Heart left ventricle (tissue), 16 donors: ENCODE measurements at regions of chr7 and their contacts with region 1.

Region 1: DNA sequence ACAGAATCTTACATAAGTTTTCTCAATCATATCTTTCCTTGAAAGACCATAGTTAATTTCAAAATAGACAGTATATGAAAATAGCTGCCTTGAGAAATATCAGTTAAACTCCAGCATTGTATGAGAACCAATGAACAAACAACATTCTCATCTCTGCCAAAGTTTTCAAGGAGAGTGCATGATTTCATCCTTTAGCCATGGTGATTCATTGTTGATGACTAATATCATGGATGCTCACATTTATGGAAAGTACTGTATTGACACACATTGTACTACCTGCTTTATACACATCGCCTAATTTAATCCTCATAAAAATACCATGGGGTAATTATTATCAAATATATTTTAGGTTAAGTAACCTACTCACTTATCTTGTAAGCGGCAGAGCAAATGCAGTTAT is 250.3 kb downstream of the CNTNAP2 start:
- DNase-seq: no peak
- ATAC-seq: no peak
- H3K4me3 ChIP-seq: no peak overlapping the region
- H3K27ac ChIP-seq: no peak overlapping the region
- H3K4me1 ChIP-seq: no peaks in the 10 kb centered on the region
- H3K27me3 ChIP-seq: no peaks in the 10 kb centered on the region
- CTCF ChIP-seq: no peak
- POLR2A ChIP-seq: no peak

Region 2: DNA sequence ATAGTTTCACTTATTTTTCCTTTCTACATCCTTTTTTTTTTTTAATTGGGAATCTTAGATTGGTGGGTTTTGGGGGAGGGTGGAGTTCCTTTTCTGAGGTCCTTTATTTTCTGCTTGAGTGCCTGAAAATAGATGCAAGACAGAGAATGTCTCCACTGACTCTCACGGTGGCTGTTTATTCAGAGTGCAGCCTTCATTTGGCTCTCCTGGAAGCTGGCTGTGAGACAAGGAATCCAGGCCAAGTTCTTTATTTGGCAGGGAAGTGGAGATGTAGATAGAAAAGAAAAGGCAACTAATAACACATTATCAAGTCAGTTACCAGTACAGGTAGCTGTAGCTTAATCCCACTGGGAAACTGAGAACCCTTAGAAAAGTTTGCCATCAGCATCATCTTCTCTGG is 131.7 kb before region 1 on chr7:
- intact Hi-C with region 1: no loop called
- DNase-seq: no peak
- ATAC-seq: peak in 2 of 4 donors; percentile 46 to 56
- H3K4me3 ChIP-seq: no peak overlapping the region
- H3K27ac ChIP-seq: no peak overlapping the region
- H3K4me1 ChIP-seq: no peaks in the 10 kb centered on the region
- H3K27me3 ChIP-seq: no peaks in the 10 kb centered on the region
- CTCF ChIP-seq: no peak
- POLR2A ChIP-seq: no peak

Region 3: DNA sequence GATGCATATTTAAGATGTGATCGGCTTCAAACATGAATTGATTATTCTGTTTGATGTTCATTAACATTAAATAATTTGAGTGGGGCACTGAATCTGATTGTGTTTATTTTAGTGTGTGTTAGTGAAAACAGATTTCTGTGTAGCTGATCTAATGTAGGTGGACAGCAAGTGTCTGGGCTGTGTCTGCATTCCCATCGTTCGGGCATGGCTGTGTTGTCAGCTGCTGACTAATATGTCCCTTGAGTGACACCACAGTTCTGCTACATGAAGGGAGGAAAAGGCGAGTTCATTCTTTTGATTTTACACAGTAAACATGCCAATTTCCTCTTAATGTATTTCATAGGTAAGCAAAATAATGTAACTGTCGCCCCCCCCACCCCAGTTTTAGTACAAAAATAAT is 47.3 kb before region 1 on chr7:
- intact Hi-C with region 1: loop called in 1 of 10 experiments (anchors 10 kb)
- DNase-seq: no peak
- ATAC-seq: no peak
- H3K4me3 ChIP-seq: no peak overlapping the region
- H3K27ac ChIP-seq: no peak overlapping the region
- H3K4me1 ChIP-seq: no peaks in the 10 kb centered on the region
- H3K27me3 ChIP-seq: no peaks in the 10 kb centered on the region
- CTCF ChIP-seq: no peak
- POLR2A ChIP-seq: no peak

Region 4: DNA sequence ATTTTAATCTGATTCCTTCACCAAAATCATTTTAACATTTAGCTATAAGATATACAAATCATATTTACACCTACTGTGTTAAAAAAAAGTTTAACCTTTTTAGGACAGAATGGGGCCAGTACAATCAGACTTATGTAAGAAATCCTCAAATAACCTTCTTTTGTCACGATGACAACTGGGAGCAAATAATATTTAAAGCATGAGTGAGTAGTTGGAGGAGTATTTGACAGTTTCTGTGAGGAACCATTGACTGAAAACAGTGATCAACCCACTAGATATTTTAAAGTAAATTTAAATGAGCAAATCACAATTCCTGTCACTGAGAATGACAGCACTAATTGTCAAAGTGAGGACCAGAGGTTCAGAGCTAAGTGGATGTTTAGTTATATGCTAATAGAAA is 38.8 kb after region 1 on chr7:
- intact Hi-C with region 1: no loop called
- DNase-seq: no peak
- ATAC-seq: no peak
- H3K4me3 ChIP-seq: no peak overlapping the region
- H3K27ac ChIP-seq: no peak overlapping the region
- H3K4me1 ChIP-seq: no peaks in the 10 kb centered on the region
- H3K27me3 ChIP-seq: no peaks in the 10 kb centered on the region
- CTCF ChIP-seq: no peak
- POLR2A ChIP-seq: no peak

Region 5: GRCh38 chr7:146423446-146423845 is 56.5 kb after region 1 on chr7:
- intact Hi-C with region 1: no loop called
- DNase-seq: no peak
- ATAC-seq: no peak
- H3K4me3 ChIP-seq: no peak overlapping the region
- H3K27ac ChIP-seq: no peak overlapping the region
- H3K4me1 ChIP-seq: no peaks in the 10 kb centered on the region
- H3K27me3 ChIP-seq: no peaks in the 10 kb centered on the region
- CTCF ChIP-seq: no peak
- POLR2A ChIP-seq: no peak